IMR-90 (cell line): ENCODE measurements at regions of chr14 and their contacts with region 1.

Region 1: GRCh38 chr14:68722186-68722585 is 70.7 kb downstream of the ZFP36L1 start:
- DNase-seq: no peak
- ATAC-seq: no peak
- H3K4me3 ChIP-seq: no peak overlapping the region
- H3K27ac ChIP-seq: no peak overlapping the region
- H3K4me1 ChIP-seq: no peaks in the 10 kb centered on the region
- H3K27me3 ChIP-seq: peaks cover 3% of the 10 kb centered on the region; the same call in 1 of the 2 replicates
- CTCF ChIP-seq: no peak
- POLR2A ChIP-seq: no peak
- RAD21 ChIP-seq: no peak

Region 2: DNA sequence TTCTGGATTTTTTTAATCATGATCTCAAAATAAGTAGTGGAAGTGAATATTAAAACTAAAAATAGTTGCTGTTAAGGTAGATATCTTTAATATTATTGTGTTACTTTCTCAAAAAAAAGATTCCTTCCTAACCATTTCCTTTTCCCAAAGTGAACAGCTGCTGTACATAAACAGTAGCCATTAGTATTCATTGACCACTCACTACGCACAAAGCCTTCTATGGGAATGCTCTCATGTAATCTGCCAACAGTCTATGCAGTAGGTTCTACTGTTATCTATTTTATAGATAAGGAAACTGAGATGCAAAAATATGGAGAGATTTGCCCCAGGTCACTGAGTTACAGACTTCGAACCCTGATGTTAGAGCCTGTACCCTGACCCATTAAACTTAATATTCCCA is 38.6 kb after region 1 on chr14:
- CTCF ChIA-PET with region 1: no interaction called
- POLR2A ChIA-PET with region 1: interaction called, 13 read pairs
- dilution Hi-C with region 1: no loop called
- in situ Hi-C with region 1: no loop called
- intact Hi-C with region 1: no loop called
- DNase-seq: peak; percentile 51
- ATAC-seq: no peak
- H3K4me3 ChIP-seq: no peak overlapping the region
- H3K27ac ChIP-seq: no peak overlapping the region
- H3K4me1 ChIP-seq: peaks cover 13% of the 10 kb centered on the region
- H3K27me3 ChIP-seq: no peaks in the 10 kb centered on the region
- CTCF ChIP-seq: no peak
- POLR2A ChIP-seq: no peak
- RAD21 ChIP-seq: no peak

Region 3: GRCh38 chr14:69387311-69387710 is 665.1 kb after region 1 on chr14:
- CTCF ChIA-PET with region 1: no interaction called
- POLR2A ChIA-PET with region 1: no interaction called
- dilution Hi-C with region 1: no loop called
- in situ Hi-C with region 1: no loop called
- intact Hi-C with region 1: no loop called
- DNase-seq: peak; percentile 25
- ATAC-seq: no peak
- H3K4me3 ChIP-seq: no peak overlapping the region
- H3K27ac ChIP-seq: no peak overlapping the region
- H3K4me1 ChIP-seq: no peaks in the 10 kb centered on the region
- H3K27me3 ChIP-seq: no peaks in the 10 kb centered on the region
- CTCF ChIP-seq: no peak
- POLR2A ChIP-seq: no peak
- RAD21 ChIP-seq: no peak